Mammary epithelial cell (primary cell): ENCODE measurements at regions of chr17 and their contacts with region 1.

Region 1: GRCh38 chr17:35947156-35947585 is 3.7 kb upstream of the LYZL6 start:
- DNase-seq: peak; percentile 31
- H3K4me3 ChIP-seq: peak overlapping the region; percentile 35 to 46 (median 38)
- H3K27ac ChIP-seq: no peak overlapping the region
- H3K4me1 ChIP-seq: no peaks in the 10 kb centered on the region
- H3K27me3 ChIP-seq: peaks cover 2% of the 10 kb centered on the region
- CTCF ChIP-seq: peak; percentile 86 to 95

Region 2: DNA sequence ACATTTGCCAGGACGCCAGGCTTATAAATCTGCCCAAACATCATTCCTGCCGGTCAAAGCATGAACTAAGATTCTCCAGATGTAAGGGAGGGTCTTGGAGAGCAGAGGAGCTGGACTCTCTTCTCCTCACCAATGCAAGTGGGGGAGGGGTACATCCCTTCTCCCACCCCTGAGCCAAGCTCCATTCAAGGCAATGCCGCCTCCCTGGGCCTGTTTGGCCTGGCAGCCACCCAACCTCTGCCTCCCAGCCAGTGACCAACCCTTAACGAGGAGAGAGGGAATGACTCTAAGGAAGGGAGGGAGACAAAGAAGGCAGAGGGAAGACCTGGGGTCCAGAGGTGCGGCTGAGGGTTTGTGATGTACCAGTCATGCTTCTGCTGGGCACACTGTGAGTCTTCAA is 172.7 kb before region 1 on chr17:
- CTCF ChIA-PET with region 1: no interaction called
- dilution Hi-C with region 1: no loop called
- in situ Hi-C with region 1: no loop called
- intact Hi-C with region 1: no loop called
- DNase-seq: no peak
- H3K4me3 ChIP-seq: no peak overlapping the region
- H3K27ac ChIP-seq: no peak overlapping the region
- H3K4me1 ChIP-seq: peaks cover 27% of the 10 kb centered on the region
- H3K27me3 ChIP-seq: no peaks in the 10 kb centered on the region
- CTCF ChIP-seq: no peak

Region 3: DNA sequence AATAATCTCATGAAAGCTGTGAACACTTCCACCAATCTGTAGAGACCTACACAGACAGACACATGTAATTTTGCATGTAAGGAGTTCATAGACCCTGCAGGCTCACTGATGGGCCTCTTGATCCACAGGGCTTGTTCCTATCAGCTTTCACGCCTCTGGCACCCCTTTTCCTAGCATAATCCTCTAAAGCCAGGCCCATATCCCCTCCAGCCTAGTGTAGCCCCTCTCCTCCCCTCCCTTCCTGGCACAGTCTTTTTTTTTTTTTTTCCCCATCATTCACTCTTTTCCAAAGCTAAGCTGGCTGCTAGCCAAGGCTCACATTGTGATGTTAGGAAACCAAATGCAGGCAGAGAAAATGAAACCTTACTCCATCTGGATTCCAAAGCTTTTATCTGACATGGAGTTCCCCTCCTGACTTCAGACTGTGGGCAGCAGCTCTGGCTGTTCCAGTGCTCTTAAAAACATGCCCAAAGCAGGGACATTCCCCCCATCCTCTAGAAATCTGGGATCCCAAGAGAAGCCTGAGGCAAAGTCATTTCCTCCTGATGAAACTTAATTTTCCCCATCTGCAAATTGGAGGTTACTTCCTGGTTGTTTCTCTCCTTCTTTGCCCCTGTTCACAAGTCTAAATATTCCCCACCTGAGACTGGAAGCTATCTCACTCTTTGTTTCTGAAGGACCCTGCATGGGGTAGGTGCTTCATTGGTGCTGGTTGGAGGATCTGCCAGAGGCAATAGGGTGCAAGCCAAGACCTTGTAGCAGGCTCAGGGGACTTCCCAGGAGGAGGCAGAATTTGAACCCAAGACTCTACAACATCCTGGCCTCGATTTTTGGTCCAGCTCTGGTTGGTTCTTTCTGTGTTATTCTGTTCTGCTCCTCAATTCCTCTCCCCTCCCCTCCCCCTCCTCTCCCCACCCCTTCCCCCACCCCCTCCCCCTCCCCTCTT is 57.1 kb before region 1 on chr17:
- CTCF ChIA-PET with region 1: no interaction called
- dilution Hi-C with region 1: no loop called
- in situ Hi-C with region 1: no loop called
- intact Hi-C with region 1: no loop called
- DNase-seq: peak; percentile 57
- H3K4me3 ChIP-seq: no peak overlapping the region
- H3K27ac ChIP-seq: no peak overlapping the region
- H3K4me1 ChIP-seq: no peaks in the 10 kb centered on the region
- H3K27me3 ChIP-seq: no peaks in the 10 kb centered on the region
- CTCF ChIP-seq: no peak

Region 4: GRCh38 chr17:35915153-35915969 is 31.8 kb before region 1 on chr17:
- CTCF ChIA-PET with region 1: no interaction called
- dilution Hi-C with region 1: no loop called
- in situ Hi-C with region 1: no loop called
- intact Hi-C with region 1: no loop called
- DNase-seq: no peak
- H3K4me3 ChIP-seq: no peak overlapping the region
- H3K27ac ChIP-seq: no peak overlapping the region
- H3K4me1 ChIP-seq: no peaks in the 10 kb centered on the region
- H3K27me3 ChIP-seq: no peaks in the 10 kb centered on the region
- CTCF ChIP-seq: no peak

Region 5: DNA sequence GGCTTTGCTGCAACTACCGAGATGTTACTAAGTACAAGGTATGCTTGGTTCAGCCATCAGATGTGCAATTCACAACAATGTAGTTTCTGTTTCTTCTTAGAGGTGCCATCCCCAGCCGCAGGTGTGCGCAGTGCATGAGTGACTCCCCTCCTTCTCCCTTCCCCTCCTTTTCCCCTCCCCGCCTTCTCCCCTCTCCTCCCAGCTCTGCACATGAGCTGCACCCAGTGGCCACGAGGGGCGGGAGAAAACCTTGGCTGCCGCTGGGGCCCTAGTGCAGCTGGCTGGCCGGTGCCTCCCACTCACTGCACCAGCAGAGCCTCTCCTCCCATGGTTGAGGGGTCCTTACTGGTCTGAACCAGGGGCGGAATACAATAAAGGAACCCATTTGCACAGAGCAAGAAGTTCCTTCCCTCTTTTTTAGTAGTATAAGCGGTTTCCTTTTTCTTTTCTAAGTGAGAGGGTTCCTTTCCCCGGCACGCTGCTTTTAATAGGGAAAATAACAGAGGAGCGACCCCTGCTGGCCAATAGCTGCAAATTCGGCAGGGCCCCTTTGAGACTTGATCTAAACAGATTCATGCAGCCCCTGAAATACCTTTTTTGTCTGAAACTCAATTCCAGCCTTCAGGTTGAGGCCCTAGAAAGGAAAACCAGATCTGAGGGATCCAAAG is 62.0 kb after region 1 on chr17:
- CTCF ChIA-PET with region 1: interaction called, 32 read pairs
- dilution Hi-C with region 1: no loop called
- in situ Hi-C with region 1: no loop called
- intact Hi-C with region 1: no loop called
- DNase-seq: peak; percentile 7
- H3K4me3 ChIP-seq: no peak overlapping the region
- H3K27ac ChIP-seq: no peak overlapping the region
- H3K4me1 ChIP-seq: no peaks in the 10 kb centered on the region
- H3K27me3 ChIP-seq: no peaks in the 10 kb centered on the region
- CTCF ChIP-seq: peak; percentile 49

Region 6: GRCh38 chr17:36019423-36019822 is 72.3 kb after region 1 on chr17:
- CTCF ChIA-PET with region 1: no interaction called
- dilution Hi-C with region 1: no loop called
- in situ Hi-C with region 1: no loop called
- intact Hi-C with region 1: no loop called
- DNase-seq: no peak
- H3K4me3 ChIP-seq: no peak overlapping the region
- H3K27ac ChIP-seq: no peak overlapping the region
- H3K4me1 ChIP-seq: no peaks in the 10 kb centered on the region
- H3K27me3 ChIP-seq: no peaks in the 10 kb centered on the region
- CTCF ChIP-seq: no peak

Region 7: GRCh38 chr17:36148559-36149295 is 201.6 kb after region 1 on chr17:
- CTCF ChIA-PET with region 1: no interaction called
- dilution Hi-C with region 1: no loop called
- in situ Hi-C with region 1: no loop called
- intact Hi-C with region 1: loop called (anchors 2 kb)
- DNase-seq: peak; percentile 24
- H3K4me3 ChIP-seq: no peak overlapping the region
- H3K27ac ChIP-seq: no peak overlapping the region
- H3K4me1 ChIP-seq: no peaks in the 10 kb centered on the region
- H3K27me3 ChIP-seq: peaks cover 2% of the 10 kb centered on the region
- CTCF ChIP-seq: peak; percentile 99